ENCODE measurements at regions of chr9 and their contacts with region 1.

Region 1: GRCh38 chr9:105414947-105415661 is 32.7 kb upstream of the FSD1L start:
- DNase-seq: peak in 1 of 3 donors; percentile 79
- ATAC-seq: peak; percentile 75
- H3K4me3 ChIP-seq: no peak overlapping the region
- H3K4me1 ChIP-seq: peaks cover 9% of the 10 kb centered on the region
- CTCF ChIP-seq: peak; percentile 59

Region 2: GRCh38 chr9:104138243-104138868 is 1276.7 kb before region 1 on chr9:
- intact Hi-C with region 1: no loop called
- DNase-seq: no peak
- ATAC-seq: no peak
- H3K4me3 ChIP-seq: no peak overlapping the region
- H3K4me1 ChIP-seq: no peaks in the 10 kb centered on the region
- CTCF ChIP-seq: no peak

Region 3: GRCh38 chr9:104927912-104928740 is 487.0 kb before region 1 on chr9 and contains the start of gene ABCA1:
- intact Hi-C with region 1: loop called in 1 of 2 experiments (anchors 10 kb)
- DNase-seq: peak; percentile 91 to 97 (median 95)
- ATAC-seq: peak; percentile 81
- H3K4me3 ChIP-seq: peak within 1 kb of the TSS; percentile 90
- H3K4me1 ChIP-seq: peaks cover 7% of the 10 kb centered on the region
- CTCF ChIP-seq: no peak
- total RNA-seq, gene ABCA1: 26.6 to 111 (median 36.8) TPM

Region 4: DNA sequence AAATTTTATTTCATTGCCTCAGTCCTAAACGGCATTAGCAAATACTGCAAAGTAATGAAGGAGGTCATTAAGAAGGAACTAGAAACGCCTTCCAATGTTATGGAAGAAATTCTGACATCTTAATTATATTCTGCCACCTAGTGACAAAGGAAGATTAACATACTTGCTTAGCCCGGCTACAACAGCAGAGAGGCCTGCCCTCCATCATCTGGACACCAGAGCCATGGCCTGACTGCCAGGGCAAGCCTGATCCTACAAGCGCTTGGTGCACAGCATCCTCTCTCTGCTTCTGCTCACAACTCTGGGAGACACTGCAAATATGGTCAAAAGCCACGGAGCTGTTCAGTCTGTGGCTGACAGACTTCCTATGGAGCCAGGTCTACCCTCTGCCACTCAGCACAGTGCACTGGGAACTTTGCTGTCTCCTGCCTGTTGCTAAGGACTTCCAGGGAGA is 257.9 kb before region 1 on chr9:
- intact Hi-C with region 1: loop called in 1 of 2 experiments (anchors 10 kb)
- DNase-seq: peak; percentile 50 to 62 (median 54)
- ATAC-seq: peak; percentile 88
- H3K4me3 ChIP-seq: no peak overlapping the region
- H3K4me1 ChIP-seq: no peaks in the 10 kb centered on the region
- CTCF ChIP-seq: peak; percentile 13

Region 5: DNA sequence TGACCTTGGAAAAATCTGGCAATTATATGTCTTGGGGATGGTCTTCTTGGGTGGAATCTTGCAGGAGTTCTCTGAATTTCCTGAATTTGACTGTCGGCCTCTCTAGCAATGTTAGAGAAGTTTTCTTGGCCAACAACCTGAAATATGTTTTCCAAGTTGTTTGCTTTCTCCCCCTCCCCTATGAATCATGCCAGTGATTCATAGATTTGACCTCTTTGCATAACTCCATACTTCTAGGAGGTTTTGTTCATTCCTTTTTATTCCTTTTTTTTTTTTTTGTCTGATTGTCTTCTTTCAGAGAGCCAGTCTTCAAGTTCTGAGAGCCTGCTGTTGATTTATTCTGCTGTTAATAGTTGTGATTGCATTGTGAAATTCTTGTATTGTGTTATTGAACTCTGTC is 227.3 kb before region 1 on chr9:
- intact Hi-C with region 1: loop called in 1 of 2 experiments (anchors 10 kb)
- DNase-seq: no peak
- ATAC-seq: no peak
- H3K4me3 ChIP-seq: no peak overlapping the region
- H3K4me1 ChIP-seq: no peaks in the 10 kb centered on the region
- CTCF ChIP-seq: no peak

Region 6: DNA sequence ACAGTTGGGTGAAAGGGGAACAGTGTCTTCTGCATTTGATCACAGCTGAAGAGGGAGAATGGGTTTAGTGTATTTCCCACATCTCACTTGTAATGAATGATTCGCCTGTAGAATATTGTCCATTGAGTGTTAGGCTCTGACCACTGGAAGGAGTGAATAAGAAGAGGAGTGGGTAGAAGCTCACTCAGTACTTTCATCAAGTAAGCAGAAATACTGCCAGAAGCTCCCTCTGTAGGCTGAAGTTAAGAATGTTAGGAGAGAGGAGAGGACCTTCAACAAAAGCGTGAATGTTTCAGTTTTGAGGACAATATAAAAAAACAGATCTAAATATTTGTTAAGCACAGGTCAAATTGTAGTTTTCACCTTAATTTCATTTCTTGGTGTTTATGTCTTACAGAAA is 60.2 kb after region 1 on chr9:
- intact Hi-C with region 1: no loop called
- DNase-seq: no peak
- ATAC-seq: no peak
- H3K4me3 ChIP-seq: no peak overlapping the region
- H3K4me1 ChIP-seq: no peaks in the 10 kb centered on the region
- CTCF ChIP-seq: no peak

Region 7: GRCh38 chr9:105973951-105974351 is 558.8 kb after region 1 on chr9:
- intact Hi-C with region 1: no loop called
- DNase-seq: no peak
- ATAC-seq: no peak
- H3K4me3 ChIP-seq: no peak overlapping the region
- H3K4me1 ChIP-seq: no peaks in the 10 kb centered on the region
- CTCF ChIP-seq: no peak

Measured in mucosa of descending colon (tissue), 3 donors.